ENCODE measurements at regions of chr20 and their contacts with region 1.

Region 1: DNA sequence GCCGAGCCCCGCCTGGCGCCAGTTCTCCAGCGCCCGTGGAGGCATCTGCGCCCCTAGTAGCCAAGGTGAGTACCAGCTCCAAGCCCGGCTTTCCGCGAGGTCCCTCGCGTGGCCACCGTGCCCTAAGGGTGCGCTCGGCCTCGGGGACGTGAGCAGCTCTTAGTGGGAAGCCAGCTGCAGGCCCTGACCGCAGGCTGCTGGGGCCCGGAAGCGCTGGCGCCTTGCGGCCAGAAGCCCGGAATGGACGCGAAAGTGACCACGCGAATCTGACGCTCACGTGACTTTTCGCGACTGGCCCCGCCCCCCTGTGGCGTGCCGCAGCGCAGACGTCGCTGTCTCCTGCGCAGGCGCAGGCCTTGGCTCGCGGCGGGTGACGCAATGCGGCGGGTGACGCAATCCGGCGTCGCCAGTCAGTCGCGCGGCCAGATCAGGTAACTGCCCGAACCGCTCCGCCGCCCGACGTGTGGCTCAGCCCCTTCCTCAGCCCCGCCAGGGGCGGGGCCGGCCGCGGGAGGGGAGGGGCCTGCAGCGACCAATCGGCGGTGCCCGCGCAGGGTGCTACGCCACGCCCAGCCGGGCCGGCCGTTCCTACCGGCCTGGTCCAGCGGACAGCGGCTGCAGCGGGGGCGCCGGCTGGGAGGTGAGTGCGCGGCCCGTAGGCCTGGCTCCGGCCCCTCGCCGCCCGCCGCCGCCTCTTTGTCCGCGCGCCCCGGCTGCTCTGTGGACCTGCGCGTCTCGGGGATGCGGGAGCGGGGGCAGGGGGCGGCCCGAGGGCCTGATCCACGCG is at the start of gene GZF1:
- DNase-seq: peak; percentile 97 to 99 (median 99)
- H3K4me3 ChIP-seq: peak within 1 kb of the TSS; percentile 2 to 86 (median 58)
- H3K27ac ChIP-seq: peak within 1 kb of the TSS; percentile 98 to 100 (median 100)
- H3K4me1 ChIP-seq: peaks cover 25 to 49% of the 10 kb centered on the region in 2 donors
- H3K27me3 ChIP-seq: no peaks in the 10 kb centered on the region
- CTCF ChIP-seq: peak in 4 of 6 experiments; percentile 10 to 54 (median 22)
- POLR2A ChIP-seq: peak; percentile 98 to 99
- total RNA-seq, gene GZF1: 11.1 to 31.7 (median 19.6) TPM

Region 2: DNA sequence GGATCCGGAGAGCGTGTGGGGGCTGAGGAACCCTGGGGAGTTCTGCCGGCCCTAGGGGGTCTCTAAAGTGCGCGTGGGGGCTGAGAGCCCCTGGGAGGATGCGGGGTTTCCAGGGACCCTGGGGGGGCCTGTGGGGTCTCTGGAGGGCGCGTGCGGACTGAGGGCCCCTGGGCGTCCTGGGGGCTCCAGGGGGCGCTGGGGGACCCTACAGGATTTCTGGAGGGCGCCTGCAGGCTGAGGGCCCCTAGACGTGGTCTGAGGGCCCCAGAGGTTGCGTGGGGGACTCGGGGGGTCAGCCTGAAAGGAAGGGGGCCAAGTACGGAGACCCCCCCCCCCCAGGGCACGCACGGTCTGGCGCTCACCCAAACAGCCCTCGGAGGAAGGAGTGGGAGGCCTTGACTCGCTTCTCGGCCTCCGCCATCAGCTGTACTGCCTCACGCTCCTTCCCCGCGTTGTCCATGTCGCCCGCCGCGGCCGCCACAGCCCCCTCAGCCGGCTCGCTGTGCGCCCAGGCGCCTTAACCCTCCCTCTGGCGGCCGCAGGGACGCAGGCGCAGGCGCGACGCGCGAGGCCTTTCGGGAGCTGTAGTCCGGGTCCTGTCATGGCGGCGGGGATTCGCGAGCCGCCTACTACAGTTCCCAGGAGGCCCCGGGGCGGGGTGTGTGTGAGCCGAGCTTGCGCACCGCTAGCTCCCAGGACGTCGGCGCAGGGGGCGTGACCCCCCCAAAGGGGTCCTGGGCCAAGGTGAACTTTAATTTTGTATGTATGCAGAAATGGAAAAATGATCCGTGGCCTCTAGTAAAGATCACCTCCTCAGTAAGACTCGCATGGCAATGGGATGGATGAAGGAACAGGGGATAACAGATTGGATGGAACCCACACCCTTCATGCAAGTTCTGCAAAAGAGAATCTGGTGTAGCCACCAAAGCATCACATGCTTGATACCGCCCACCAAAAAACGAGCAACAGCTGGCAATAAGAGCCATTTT is 59.4 kb after region 1 on chr20 and contains the start of gene NAPB:
- intact Hi-C with region 1: loop called (anchors 5 to 10 kb)
- DNase-seq: peak; percentile 93 to 97 (median 95)
- H3K4me3 ChIP-seq: peak within 1 kb of the TSS; percentile 85 to 98 (median 94)
- H3K27ac ChIP-seq: peak within 1 kb of the TSS; percentile 83 to 92 (median 91)
- H3K4me1 ChIP-seq: peaks cover 18 to 33% of the 10 kb centered on the region in 2 donors
- H3K27me3 ChIP-seq: no peaks in the 10 kb centered on the region
- CTCF ChIP-seq: peak; percentile 43 to 91 (median 67)
- POLR2A ChIP-seq: peak; percentile 89 to 95
- total RNA-seq, gene NAPB: 13.8 to 27.5 (median 20.3) TPM

Measured in adrenal gland (tissue), 19 donors.